ENCODE measurements at regions of chr18 and their contacts with region 1.

Region 1: DNA sequence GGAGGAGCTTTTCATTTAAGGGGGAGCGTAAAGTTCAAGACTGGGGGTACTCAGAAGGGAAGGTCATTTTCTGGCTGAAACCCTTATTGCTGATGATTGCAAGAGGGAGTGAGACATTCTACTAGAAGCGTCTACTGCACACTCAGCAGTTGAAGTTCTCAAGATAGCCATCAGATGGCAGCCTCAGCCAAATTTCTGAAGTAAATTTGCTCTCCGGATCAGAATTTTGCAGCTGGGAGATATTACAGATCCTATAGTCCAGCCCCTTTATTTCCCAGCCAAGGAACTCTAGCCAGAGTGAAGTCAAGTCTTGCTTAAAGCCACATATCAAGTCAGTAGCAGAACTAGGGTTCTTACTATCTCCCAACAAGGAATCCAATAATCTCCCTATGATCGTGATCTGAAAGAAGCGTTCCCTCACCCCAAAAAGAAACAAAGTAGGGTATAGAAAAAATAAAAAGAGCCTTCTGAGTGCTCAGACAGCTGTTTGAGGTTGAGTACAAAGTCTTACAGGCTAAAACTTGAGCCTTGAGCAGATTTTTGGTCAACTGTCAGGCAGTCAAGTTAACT is 24.0 kb downstream of the RAX start:
- DNase-seq: peak; percentile 80
- ATAC-seq: peak; percentile 98
- H3K4me3 ChIP-seq: no peak overlapping the region
- H3K27ac ChIP-seq: no peak overlapping the region
- H3K4me1 ChIP-seq: no peaks in the 10 kb centered on the region
- H3K27me3 ChIP-seq: peaks cover 20% of the 10 kb centered on the region
- CTCF ChIP-seq: peak; percentile 77
- POLR2A ChIP-seq: no peak
- RAD21 ChIP-seq: peak; percentile 71

Region 2: GRCh38 chr18:58776084-58776483 is 473.2 kb before region 1 on chr18:
- CTCF ChIA-PET with region 1: no interaction called
- POLR2A ChIA-PET with region 1: no interaction called
- dilution Hi-C with region 1: no loop called
- in situ Hi-C with region 1: no loop called
- intact Hi-C with region 1: loop called (anchors 10 kb)
- DNase-seq: peak; percentile 13
- ATAC-seq: peak; percentile 15
- H3K4me3 ChIP-seq: no peak overlapping the region
- H3K27ac ChIP-seq: no peak overlapping the region
- H3K4me1 ChIP-seq: peaks cover 7% of the 10 kb centered on the region
- H3K27me3 ChIP-seq: peaks cover 3% of the 10 kb centered on the region
- CTCF ChIP-seq: no peak
- POLR2A ChIP-seq: no peak
- RAD21 ChIP-seq: no peak

Region 3: DNA sequence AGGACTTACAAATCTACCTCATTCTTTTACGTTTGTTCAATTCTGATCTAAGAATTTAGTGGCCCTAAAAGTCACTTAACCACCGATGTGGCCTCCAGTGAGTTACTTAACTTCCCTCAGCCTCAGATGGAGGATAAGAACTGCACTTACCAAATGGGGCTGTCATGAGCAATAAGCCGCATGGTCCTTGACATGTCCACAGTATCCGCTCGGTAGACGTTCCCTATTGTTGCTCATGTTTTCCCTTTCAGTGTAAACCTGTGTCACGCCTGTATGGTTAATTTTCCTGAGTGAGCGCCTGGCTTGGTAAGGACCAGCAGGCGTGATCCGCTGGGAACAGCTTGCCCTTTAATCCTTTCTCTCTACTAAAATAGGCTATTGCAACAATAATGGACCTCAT is 89.3 kb before region 1 on chr18:
- CTCF ChIA-PET with region 1: no interaction called
- POLR2A ChIA-PET with region 1: no interaction called
- dilution Hi-C with region 1: no loop called
- in situ Hi-C with region 1: no loop called
- intact Hi-C with region 1: no loop called
- DNase-seq: no peak
- ATAC-seq: no peak
- H3K4me3 ChIP-seq: no peak overlapping the region
- H3K27ac ChIP-seq: no peak overlapping the region
- H3K4me1 ChIP-seq: peaks cover under 1% of the 10 kb centered on the region; the same call in 1 of the 2 replicates
- H3K27me3 ChIP-seq: peaks cover 3% of the 10 kb centered on the region; the same call in 1 of the 2 replicates
- CTCF ChIP-seq: no peak
- POLR2A ChIP-seq: no peak
- RAD21 ChIP-seq: no peak